Activated CD4-positive, alpha-beta memory T cell treated with anti-CD3 and anti-CD28 coated beads for 36 hours (primary cell): ENCODE measurements at regions of chr15 and their contacts with region 1.

Region 1: GRCh38 chr15:65028921-65029735 is at the start of gene MTFMT:
- DNase-seq: peak; percentile 94
- H3K4me3 Mint-ChIP-seq: peak within 1 kb of the TSS; percentile 83
- H3K27ac Mint-ChIP-seq: peak within 1 kb of the TSS; percentile 38
- H3K4me1 Mint-ChIP-seq: peaks cover 21% of the 10 kb centered on the region
- H3K27me3 Mint-ChIP-seq: peaks cover 6% of the 10 kb centered on the region
- total RNA-seq, gene MTFMT: 18.2 to 18.3 TPM

Region 2: GRCh38 chr15:64989416-64990167 is 39.5 kb before region 1 on chr15 and contains the start of gene SPG21:
- CTCF ChIA-PET with region 1: interaction called, 3 read pairs
- POLR2A ChIA-PET with region 1: no interaction called
- intact Hi-C with region 1: loop called (anchors 1 kb)
- DNase-seq: peak; percentile 95
- H3K4me3 Mint-ChIP-seq: peak within 1 kb of the TSS; percentile 96
- H3K27ac Mint-ChIP-seq: peak within 1 kb of the TSS; percentile 82
- H3K4me1 Mint-ChIP-seq: peaks cover 35% of the 10 kb centered on the region
- H3K27me3 Mint-ChIP-seq: no peaks in the 10 kb centered on the region
- total RNA-seq, gene SPG21: 69.3 to 73.0 TPM

Region 3: DNA sequence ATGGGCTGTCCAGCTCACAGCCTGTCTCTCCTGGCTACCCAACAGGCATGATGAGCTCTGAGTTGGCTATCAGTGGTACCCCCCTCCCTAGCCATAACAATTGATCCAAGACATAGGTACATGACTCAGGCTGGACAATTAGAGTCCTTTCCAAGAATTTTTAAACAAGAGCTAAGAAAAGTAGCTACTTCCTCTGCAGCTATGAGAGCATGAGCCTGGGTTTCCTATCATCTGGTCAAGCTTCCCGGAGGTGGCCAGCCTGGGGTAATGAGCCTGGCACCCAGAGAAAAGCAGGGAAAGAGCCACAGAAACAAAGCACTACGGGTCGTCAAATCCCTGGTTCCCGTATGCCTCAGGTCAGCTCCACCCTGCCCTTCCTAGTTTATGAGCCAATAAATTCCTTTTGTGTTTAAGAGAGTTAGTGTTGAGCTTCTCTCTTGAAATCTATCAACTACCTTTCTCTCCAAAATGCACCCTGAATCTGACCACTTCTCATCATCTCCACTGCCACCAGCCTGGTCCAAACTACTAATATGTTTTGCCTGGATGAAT is 13.7 kb after region 1 on chr15:
- CTCF ChIA-PET with region 1: interaction called, 16 read pairs
- POLR2A ChIA-PET with region 1: no interaction called
- intact Hi-C with region 1: no loop called
- DNase-seq: no peak
- H3K4me3 Mint-ChIP-seq: no peak overlapping the region
- H3K27ac Mint-ChIP-seq: no peak overlapping the region
- H3K4me1 Mint-ChIP-seq: peaks cover 4% of the 10 kb centered on the region
- H3K27me3 Mint-ChIP-seq: peaks cover 1% of the 10 kb centered on the region

Region 4: GRCh38 chr15:65077981-65078352 is 48.8 kb after region 1 on chr15:
- CTCF ChIA-PET with region 1: interaction called, 35 read pairs
- POLR2A ChIA-PET with region 1: no interaction called
- intact Hi-C with region 1: loop called (anchors 1 kb)
- DNase-seq: peak; percentile 67
- H3K4me3 Mint-ChIP-seq: no peak overlapping the region
- H3K27ac Mint-ChIP-seq: no peak overlapping the region
- H3K4me1 Mint-ChIP-seq: peaks cover 9% of the 10 kb centered on the region
- H3K27me3 Mint-ChIP-seq: peaks cover 29% of the 10 kb centered on the region